ENCODE measurements at regions of chr6 and their contacts with region 1.

Region 1: GRCh38 chr6:43059168-43060033 is at the starts of genes KLC4 and MRPL2:
- DNase-seq: peak; percentile 97 to 99 (median 98)
- ATAC-seq: peak; percentile 96 to 99 (median 98)
- H3K4me3 ChIP-seq: peak within 1 kb of the TSS; percentile 69 to 96 (median 84)
- H3K27ac ChIP-seq: peak within 1 kb of the TSS; percentile 67 to 98 (median 88)
- H3K4me1 ChIP-seq: peaks cover 0 to 41% (median 21%) of the 10 kb centered on the region in 12 donors
- H3K27me3 ChIP-seq: no peaks in the 10 kb centered on the region
- CTCF ChIP-seq: no peak
- POLR2A ChIP-seq: peak in 1 of 2 donors; percentile 69
- total RNA-seq, gene KLC4: 18.8 to 35.4 (median 26.9) TPM
- total RNA-seq, gene MRPL2: 54.0 to 98.5 (median 83.1) TPM

Region 2: DNA sequence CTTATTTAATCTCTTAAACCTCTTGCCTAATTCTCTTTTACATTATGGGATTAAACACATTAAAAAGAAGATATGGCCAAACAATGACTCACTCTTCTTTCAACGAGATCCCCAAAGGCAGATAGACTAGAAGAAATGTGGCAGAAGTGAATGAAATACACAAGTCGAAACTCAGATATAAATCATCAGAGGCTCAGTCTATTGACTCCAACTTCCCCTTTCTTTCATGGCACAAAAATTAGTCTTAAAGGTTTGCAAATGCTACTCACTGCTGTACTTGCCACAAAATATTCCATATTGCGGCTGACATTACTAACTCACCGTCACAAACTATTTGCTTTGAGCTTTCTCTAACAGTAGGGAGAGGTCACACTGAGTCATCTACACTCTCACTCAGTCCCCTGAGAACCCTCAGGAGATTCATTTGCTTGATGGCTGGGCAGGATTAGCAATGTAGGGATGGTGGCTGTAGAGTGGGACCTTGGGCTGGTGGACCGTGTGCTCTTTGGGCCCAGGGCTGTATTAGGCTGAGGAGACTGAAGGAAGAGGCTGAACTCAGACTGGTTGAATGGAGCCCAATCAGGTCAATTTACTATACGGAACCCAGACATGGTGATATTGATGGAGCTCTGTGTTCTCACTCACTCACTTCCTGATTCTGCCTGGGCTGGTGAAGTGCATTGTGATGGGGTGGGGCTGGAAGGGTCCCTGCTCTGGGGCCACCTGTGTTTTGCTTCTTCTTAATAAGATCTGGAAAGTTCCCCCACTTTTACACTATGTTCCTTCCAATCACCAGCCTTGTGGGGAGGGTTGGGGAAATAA is 538.4 kb before region 1 on chr6:
- intact Hi-C with region 1: no loop called
- DNase-seq: no peak
- ATAC-seq: no peak
- H3K4me3 ChIP-seq: no peak overlapping the region
- H3K27ac ChIP-seq: no peak overlapping the region
- H3K4me1 ChIP-seq: no peaks in the 10 kb centered on the region
- H3K27me3 ChIP-seq: no peaks in the 10 kb centered on the region
- CTCF ChIP-seq: no peak
- POLR2A ChIP-seq: no peak

Region 3: GRCh38 chr6:42947950-42948349 is 111.5 kb before region 1 on chr6:
- intact Hi-C with region 1: no loop called
- DNase-seq: no peak
- ATAC-seq: peak in 1 of 4 donors; percentile 20
- H3K4me3 ChIP-seq: no peak overlapping the region
- H3K27ac ChIP-seq: no peak overlapping the region
- H3K4me1 ChIP-seq: peaks cover 0 to 4% (median 0%) of the 10 kb centered on the region in 12 donors
- H3K27me3 ChIP-seq: no peaks in the 10 kb centered on the region
- CTCF ChIP-seq: no peak
- POLR2A ChIP-seq: no peak

Region 4: GRCh38 chr6:42984001-42984923 is 75.1 kb before region 1 on chr6 and contains the start of gene PPP2R5D:
- intact Hi-C with region 1: loop called in 1 of 10 experiments (anchors 2 kb)
- DNase-seq: peak; percentile 97 to 99 (median 98)
- ATAC-seq: peak; percentile 95 to 99 (median 98)
- H3K4me3 ChIP-seq: peak within 1 kb of the TSS; percentile 74 to 97 (median 86)
- H3K27ac ChIP-seq: peak within 1 kb of the TSS; percentile 60 to 93 (median 90)
- H3K4me1 ChIP-seq: peaks cover 3 to 61% (median 45%) of the 10 kb centered on the region in 12 donors
- H3K27me3 ChIP-seq: no peaks in the 10 kb centered on the region
- CTCF ChIP-seq: no peak
- POLR2A ChIP-seq: peak in 1 of 2 donors; percentile 93
- total RNA-seq, gene PPP2R5D: 30.9 to 51.3 (median 35.1) TPM

Region 5: GRCh38 chr6:43105538-43106220 is 46.3 kb after region 1 on chr6:
- intact Hi-C with region 1: no loop called
- DNase-seq: no peak
- ATAC-seq: no peak
- H3K4me3 ChIP-seq: no peak overlapping the region
- H3K27ac ChIP-seq: no peak overlapping the region
- H3K4me1 ChIP-seq: no peaks in the 10 kb centered on the region
- H3K27me3 ChIP-seq: no peaks in the 10 kb centered on the region
- CTCF ChIP-seq: no peak
- POLR2A ChIP-seq: no peak

Region 6: GRCh38 chr6:43174263-43175112 is 115.1 kb after region 1 on chr6:
- intact Hi-C with region 1: loop called in 1 of 10 experiments (anchors 5 kb)
- DNase-seq: peak; percentile 96 to 99 (median 98)
- ATAC-seq: peak; percentile 79 to 87 (median 82)
- H3K4me3 ChIP-seq: peak overlapping the region in 11 of 12 donors; percentile 25 to 100 (median 95)
- H3K27ac ChIP-seq: peak overlapping the region; percentile 87 to 100 (median 98)
- H3K4me1 ChIP-seq: peaks cover 8 to 44% (median 38%) of the 10 kb centered on the region in 12 donors
- H3K27me3 ChIP-seq: no peaks in the 10 kb centered on the region
- CTCF ChIP-seq: peak in 8 of 12 donors; percentile 19 to 43 (median 30)
- POLR2A ChIP-seq: peak in 1 of 2 donors; percentile 71

Region 7: GRCh38 chr6:43193939-43194338 is 134.5 kb after region 1 on chr6:
- intact Hi-C with region 1: no loop called
- DNase-seq: no peak
- ATAC-seq: no peak
- H3K4me3 ChIP-seq: no peak overlapping the region
- H3K27ac ChIP-seq: no peak overlapping the region
- H3K4me1 ChIP-seq: peaks cover 0 to 6% (median 0%) of the 10 kb centered on the region in 12 donors
- H3K27me3 ChIP-seq: no peaks in the 10 kb centered on the region
- CTCF ChIP-seq: no peak
- POLR2A ChIP-seq: no peak

Measured in heart left ventricle (tissue), 16 donors.